ENCODE measurements at regions of chr5 and their contacts with region 1.

Region 1: DNA sequence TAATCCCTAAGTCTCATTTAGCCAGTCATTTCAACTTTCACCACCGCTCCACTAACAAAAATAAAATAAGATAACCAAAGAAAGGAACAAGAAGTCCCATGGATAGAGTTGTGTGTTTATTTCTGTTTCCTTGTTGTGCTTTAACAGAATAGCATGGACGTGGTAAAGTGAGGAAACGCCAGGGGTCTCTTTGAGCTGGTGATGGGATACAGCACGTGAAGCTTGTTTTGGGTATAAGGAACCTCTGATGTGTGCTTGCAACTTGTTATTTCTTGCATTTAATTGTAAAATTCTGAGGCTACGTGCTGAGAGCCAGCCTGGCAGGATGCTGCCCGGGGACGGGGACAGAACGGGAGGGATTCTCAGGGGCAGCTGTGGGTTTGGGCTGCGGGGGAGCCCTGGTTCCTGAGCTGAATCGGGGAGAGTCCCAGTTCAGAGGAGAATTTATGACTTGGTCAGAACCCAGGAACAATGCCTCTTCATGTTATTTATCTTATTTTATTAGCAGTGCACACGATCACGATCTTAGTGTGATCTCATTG is 63.4 kb downstream of the ANKRD33B start:
- DNase-seq: no peak
- H3K4me3 ChIP-seq: peak overlapping the region; percentile 40
- H3K27ac ChIP-seq: peak overlapping the region; percentile 68
- H3K27me3 ChIP-seq: no peaks in the 10 kb centered on the region
- CTCF ChIP-seq: no peak

Region 2: GRCh38 chr5:10441083-10441991 is 185.9 kb before region 1 on chr5 and contains the start of gene ROPN1L:
- CTCF ChIA-PET with region 1: interaction called, 10 read pairs
- POLR2A ChIA-PET with region 1: no interaction called
- DNase-seq: peak; percentile 56
- H3K4me3 ChIP-seq: peak within 1 kb of the TSS; percentile 73
- H3K27ac ChIP-seq: peak within 1 kb of the TSS; percentile 66
- H3K27me3 ChIP-seq: no peaks in the 10 kb centered on the region
- CTCF ChIP-seq: no peak
- polyA plus RNA-seq, gene ROPN1L: 0.24 and 0.29 TPM in 2 replicates

Region 3: DNA sequence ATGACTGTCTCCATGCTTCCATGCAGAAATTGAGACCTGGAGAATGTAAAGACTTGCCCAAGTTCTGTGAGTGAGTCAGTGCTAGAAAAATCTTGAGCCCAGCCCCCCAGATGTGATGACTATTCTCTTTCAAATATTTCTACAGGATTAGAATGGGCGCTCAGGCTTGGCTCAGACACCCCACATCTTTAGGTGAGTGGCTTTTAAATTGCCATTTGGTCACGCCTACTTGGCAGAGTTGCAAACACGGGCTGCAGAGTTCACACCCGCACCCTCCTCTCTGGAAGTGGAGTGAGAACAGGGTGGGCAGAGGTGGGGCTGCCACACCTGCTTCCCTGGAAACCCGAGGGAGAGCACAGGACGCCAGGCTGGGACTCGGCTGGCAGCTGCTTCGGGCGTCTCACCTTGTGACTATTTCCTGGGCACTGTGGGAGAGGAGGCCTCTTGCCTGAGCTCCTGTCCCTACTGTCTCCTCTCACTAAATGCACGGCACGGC is 148.0 kb before region 1 on chr5:
- CTCF ChIA-PET with region 1: interaction called, 10 read pairs
- POLR2A ChIA-PET with region 1: no interaction called
- DNase-seq: no peak
- H3K4me3 ChIP-seq: no peak overlapping the region
- H3K27ac ChIP-seq: peak overlapping the region; percentile 49
- H3K27me3 ChIP-seq: no peaks in the 10 kb centered on the region
- CTCF ChIP-seq: no peak

Region 4: GRCh38 chr5:10563945-10564837 is 63.0 kb before region 1 on chr5 and contains the start of gene ANKRD33B:
- CTCF ChIA-PET with region 1: interaction called, 28 read pairs
- POLR2A ChIA-PET with region 1: interaction called, 8 read pairs
- DNase-seq: no peak
- H3K4me3 ChIP-seq: peak within 1 kb of the TSS; percentile 90
- H3K27ac ChIP-seq: peak within 1 kb of the TSS; percentile 65
- H3K27me3 ChIP-seq: no peaks in the 10 kb centered on the region
- CTCF ChIP-seq: no peak
- polyA plus RNA-seq, gene ANKRD33B: 4.6 and 4.8 TPM in 2 replicates

Region 5: GRCh38 chr5:10607666-10608073 is 19.6 kb before region 1 on chr5:
- CTCF ChIA-PET with region 1: interaction called, 28 read pairs
- POLR2A ChIA-PET with region 1: interaction called, 3 read pairs
- DNase-seq: no peak
- H3K4me3 ChIP-seq: no peak overlapping the region
- H3K27ac ChIP-seq: peak overlapping the region; percentile 52
- H3K27me3 ChIP-seq: no peaks in the 10 kb centered on the region
- CTCF ChIP-seq: peak; percentile 37

Region 6: DNA sequence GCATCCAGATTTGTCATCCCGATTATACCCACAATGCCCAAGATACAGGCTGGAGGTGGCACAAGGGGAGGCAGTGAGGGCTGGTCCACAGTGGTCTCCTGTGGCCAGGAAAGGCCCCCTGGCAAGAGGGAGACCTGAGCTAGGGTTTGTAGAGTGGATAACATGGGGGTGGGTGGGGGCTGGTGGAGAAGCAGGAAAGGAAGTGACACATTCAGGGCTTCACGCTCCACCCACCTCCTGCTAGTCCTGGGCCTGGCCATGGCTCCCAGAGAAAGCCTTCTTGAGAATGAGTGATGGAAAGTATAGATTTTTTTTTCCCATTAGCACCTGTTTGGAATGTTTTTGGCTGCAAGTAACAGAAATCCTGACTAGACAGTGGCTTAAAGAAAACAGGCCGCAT is 17.9 kb after region 1 on chr5:
- CTCF ChIA-PET with region 1: interaction called, 14 read pairs
- POLR2A ChIA-PET with region 1: no interaction called
- DNase-seq: no peak
- H3K4me3 ChIP-seq: no peak overlapping the region
- H3K27ac ChIP-seq: no peak overlapping the region
- H3K27me3 ChIP-seq: no peaks in the 10 kb centered on the region
- CTCF ChIP-seq: no peak

Region 7: GRCh38 chr5:10949856-10950628 is 322.8 kb after region 1 on chr5:
- CTCF ChIA-PET with region 1: no interaction called
- POLR2A ChIA-PET with region 1: no interaction called
- DNase-seq: no peak
- H3K4me3 ChIP-seq: no peak overlapping the region
- H3K27ac ChIP-seq: no peak overlapping the region
- H3K27me3 ChIP-seq: peaks cover 8% of the 10 kb centered on the region
- CTCF ChIP-seq: no peak

Measured in AG04450 (cell line).